ENCODE measurements at regions of chr5 and their contacts with region 1.

Region 1: DNA sequence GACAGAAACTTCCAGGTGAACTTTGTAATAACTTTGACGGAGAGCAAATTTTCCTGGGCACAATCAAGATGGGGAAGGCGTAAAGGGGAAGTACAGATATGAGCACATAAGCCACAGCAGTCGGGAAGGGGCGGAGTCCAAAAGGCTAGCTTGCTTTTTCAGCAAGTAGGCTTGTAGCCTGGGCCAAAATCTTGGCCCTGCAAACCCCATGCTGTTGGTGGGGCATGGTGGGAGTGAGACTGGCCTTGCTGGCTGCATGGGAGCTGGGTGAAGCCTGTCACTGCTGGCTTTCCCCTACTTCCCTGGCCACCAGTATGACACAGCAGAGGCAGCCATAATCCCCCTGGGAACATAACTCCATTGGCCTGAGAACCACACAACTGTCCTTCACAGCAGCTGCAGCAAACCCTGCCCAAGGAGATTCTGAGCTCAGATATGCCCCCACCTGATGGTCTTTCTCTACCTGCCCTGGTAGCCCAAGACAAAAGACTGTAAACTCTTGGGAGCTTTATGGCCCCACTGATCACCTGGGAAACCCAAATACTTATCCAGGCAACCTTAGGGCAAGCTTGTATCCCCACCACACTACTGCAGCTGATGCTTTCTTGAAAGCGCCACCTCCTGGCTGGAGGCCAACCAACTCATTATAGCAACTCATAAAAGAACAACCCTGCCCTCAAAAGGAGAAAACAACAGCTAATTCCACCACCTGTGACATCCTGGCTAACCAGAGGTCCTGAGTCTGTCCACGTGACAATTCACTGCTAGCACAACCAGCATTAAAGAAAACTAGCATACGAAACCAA is 24.0 kb downstream of the DCTN4 start:
- DNase-seq: no peak
- H3K4me3 Mint-ChIP-seq: no peak overlapping the region
- H3K27ac Mint-ChIP-seq: peak overlapping the region; percentile 58
- H3K4me1 Mint-ChIP-seq: peaks cover 52% of the 10 kb centered on the region
- H3K27me3 Mint-ChIP-seq: no peaks in the 10 kb centered on the region

Region 2: GRCh38 chr5:150700594-150701293 is 34.0 kb before region 1 on chr5 and contains the start of gene RBM22:
- CTCF ChIA-PET with region 1: interaction called, 10 read pairs
- POLR2A ChIA-PET with region 1: no interaction called
- DNase-seq: peak; percentile 94
- H3K4me3 Mint-ChIP-seq: no peak within 1 kb of the TSS
- H3K27ac Mint-ChIP-seq: no peak within 1 kb of the TSS
- H3K4me1 Mint-ChIP-seq: peaks cover 13% of the 10 kb centered on the region
- H3K27me3 Mint-ChIP-seq: no peaks in the 10 kb centered on the region
- total RNA-seq, gene RBM22: 61.9 to 65.6 TPM

Region 3: DNA sequence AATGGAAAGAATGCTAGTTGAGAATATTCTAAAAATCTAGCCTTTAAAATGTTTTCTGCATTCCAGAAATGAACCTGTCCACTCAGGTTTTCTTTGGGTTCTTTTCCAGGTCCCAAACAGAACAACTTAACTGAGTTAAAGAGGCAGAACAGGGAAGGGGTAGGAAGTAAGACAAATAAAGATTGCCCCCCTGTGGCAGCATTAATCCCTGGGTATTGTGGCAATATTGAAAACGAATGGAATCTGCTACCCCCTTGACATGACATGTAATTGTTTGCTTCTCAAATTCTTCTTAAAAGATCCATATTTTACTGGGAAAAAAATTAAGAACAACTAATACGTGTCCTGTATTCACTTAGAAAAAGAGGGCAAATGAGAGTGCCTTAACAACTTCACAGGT is 24.6 kb before region 1 on chr5:
- CTCF ChIA-PET with region 1: interaction called, 12 read pairs
- POLR2A ChIA-PET with region 1: no interaction called
- DNase-seq: no peak
- H3K4me3 Mint-ChIP-seq: no peak overlapping the region
- H3K27ac Mint-ChIP-seq: no peak overlapping the region
- H3K4me1 Mint-ChIP-seq: no peaks in the 10 kb centered on the region
- H3K27me3 Mint-ChIP-seq: no peaks in the 10 kb centered on the region

Measured in activated CD4-positive, alpha-beta T cell treated with anti-CD3 and anti-CD28 coated beads, Interleukin-2, amount 10 ng/mL, durations not matched to agents 7 days and 5 days (primary cell).